Aorta (tissue), 5 donors: ENCODE measurements at regions of chr10 and their contacts with region 1.

Region 1: DNA sequence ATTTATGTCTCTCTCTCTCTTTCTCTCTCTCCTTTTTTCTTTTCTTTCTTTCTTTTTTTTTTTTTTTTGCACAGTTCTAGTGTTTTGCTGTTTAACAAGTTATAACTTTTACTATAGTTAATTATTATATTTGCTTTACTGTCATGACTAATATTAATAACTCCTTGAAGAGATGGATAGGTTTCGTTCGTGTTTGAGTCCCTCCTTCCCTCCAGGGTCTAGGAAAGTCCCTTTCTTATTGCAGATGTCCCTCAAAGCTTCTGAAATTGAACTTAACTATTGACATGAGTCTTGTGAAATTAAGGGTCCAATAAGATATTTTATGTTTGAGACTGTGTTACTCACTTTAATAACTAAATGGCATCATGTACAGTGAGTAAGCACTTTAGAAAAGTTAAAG is 131.4 kb downstream of the PLXDC2 start:
- DNase-seq: no peak
- ATAC-seq: no peak
- H3K4me3 ChIP-seq: no peak overlapping the region
- H3K27ac ChIP-seq: peak overlapping the region in 1 of 2 donors; percentile 57
- H3K4me1 ChIP-seq: peaks cover 8 to 9% of the 10 kb centered on the region in 2 donors
- H3K27me3 ChIP-seq: no peaks in the 10 kb centered on the region

Region 2: DNA sequence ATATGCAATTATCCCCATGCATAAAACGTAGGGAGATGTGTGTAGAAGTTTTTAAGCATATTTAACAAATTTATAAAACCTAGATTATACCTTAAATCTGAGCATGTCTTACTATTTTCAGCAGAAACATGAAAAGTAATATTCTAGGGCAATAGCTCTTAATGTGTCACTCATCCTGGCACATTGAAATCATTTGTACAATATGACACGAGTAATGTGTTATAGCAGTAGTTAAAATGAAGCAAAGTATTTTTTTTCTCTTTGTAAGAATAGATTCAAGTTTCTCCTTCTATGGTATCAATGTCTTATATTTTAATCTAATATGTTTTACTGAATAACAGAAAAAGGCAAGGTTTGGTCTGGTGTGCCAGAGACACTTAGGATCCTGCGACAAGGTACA is 406.4 kb before region 1 on chr10:
- intact Hi-C with region 1: no loop called
- DNase-seq: no peak
- ATAC-seq: no peak
- H3K4me3 ChIP-seq: no peak overlapping the region
- H3K27ac ChIP-seq: no peak overlapping the region
- H3K4me1 ChIP-seq: no peaks in the 10 kb centered on the region
- H3K27me3 ChIP-seq: no peaks in the 10 kb centered on the region

Region 3: DNA sequence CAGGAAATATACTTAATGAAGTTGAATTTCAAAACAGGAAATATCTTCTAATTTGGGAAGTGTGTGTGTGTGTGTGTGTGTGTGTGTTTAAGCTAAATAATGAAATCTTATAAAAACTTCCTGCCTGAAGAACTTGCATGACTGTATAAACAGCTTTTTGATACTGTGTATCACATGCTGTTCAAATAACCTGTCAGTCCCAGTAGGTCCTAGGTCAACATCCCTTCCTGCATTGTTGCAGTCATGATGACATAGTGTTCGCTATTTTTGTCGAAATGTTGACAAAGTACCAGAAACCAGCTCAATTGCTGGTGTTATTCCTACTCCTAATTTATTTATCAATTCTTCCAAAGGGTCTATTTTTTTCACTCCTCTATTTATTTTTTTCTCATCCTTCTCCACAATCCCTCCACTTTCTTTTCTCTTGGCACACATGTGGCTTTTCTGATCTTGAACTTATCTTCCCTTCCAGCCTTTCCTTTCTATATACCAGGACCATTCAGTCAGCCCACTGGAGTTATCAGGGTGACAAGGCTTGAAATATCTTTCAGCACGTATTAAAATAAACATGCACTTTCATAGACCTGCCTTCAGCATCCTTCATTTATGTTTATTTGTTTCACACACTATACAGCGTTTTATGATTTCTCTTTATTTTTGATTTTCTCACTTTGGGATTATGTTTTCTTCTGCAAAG is 15.6 kb before region 1 on chr10:
- intact Hi-C with region 1: loop called in 1 of 2 experiments (anchors 2 kb)
- DNase-seq: no peak
- ATAC-seq: peak; percentile 65
- H3K4me3 ChIP-seq: no peak overlapping the region
- H3K27ac ChIP-seq: peak overlapping the region in 1 of 2 donors; percentile 43
- H3K4me1 ChIP-seq: peaks cover 5 to 8% of the 10 kb centered on the region in 2 donors
- H3K27me3 ChIP-seq: no peaks in the 10 kb centered on the region